GM10248 (cell line): ENCODE measurements at regions of chr1 and their contacts with region 1.

Region 1: GRCh38 chr1:211654838-211655787 is 20.3 kb downstream of the NEK2 start:
- DNase-seq: peak; percentile 79
- CTCF ChIP-seq: peak; percentile 91

Region 2: DNA sequence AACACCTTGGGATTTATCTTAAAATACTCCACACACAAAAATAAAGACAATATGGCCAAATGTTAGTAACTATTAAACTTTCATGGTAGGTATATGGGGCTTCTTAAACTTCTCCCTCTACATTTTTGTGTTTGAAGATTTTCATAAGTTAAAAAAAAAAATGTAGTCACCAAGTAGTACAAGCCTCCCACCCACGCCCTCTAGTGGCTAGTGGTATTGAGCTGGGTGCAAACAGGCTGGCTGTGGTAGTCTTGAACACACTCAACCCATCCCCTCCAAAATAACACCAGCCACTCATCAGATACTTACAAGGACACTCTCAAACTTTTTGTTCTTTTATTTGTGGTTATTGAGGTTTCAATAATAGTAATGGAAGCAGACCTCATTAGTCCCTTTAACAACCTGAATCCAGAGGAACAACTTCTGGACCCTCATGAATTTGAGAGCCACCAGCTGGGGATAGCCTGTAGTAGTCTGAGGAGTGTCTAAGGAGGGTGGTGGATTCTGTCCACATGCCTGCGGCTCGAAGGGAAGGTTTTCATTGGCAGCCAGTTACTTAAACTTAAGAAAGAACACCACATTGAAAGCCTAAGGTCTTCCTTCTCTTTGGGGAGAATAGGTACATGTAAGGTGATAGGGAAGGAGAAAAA is 178.8 kb before region 1 on chr1:
- CTCF ChIA-PET with region 1: interaction called, 11 read pairs
- POLR2A ChIA-PET with region 1: no interaction called
- DNase-seq: peak; percentile 75
- CTCF ChIP-seq: peak; percentile 83

Region 3: GRCh38 chr1:211578640-211579433 is 76.3 kb before region 1 on chr1 and contains the start of gene SLC30A1:
- CTCF ChIA-PET with region 1: interaction called, 12 read pairs
- POLR2A ChIA-PET with region 1: no interaction called
- DNase-seq: peak; percentile 100
- CTCF ChIP-seq: no peak

Region 4: GRCh38 chr1:211643324-211644212 is 11.5 kb before region 1 on chr1:
- CTCF ChIA-PET with region 1: interaction called, 19 read pairs
- POLR2A ChIA-PET with region 1: no interaction called
- DNase-seq: peak; percentile 19
- CTCF ChIP-seq: no peak

Region 5: DNA sequence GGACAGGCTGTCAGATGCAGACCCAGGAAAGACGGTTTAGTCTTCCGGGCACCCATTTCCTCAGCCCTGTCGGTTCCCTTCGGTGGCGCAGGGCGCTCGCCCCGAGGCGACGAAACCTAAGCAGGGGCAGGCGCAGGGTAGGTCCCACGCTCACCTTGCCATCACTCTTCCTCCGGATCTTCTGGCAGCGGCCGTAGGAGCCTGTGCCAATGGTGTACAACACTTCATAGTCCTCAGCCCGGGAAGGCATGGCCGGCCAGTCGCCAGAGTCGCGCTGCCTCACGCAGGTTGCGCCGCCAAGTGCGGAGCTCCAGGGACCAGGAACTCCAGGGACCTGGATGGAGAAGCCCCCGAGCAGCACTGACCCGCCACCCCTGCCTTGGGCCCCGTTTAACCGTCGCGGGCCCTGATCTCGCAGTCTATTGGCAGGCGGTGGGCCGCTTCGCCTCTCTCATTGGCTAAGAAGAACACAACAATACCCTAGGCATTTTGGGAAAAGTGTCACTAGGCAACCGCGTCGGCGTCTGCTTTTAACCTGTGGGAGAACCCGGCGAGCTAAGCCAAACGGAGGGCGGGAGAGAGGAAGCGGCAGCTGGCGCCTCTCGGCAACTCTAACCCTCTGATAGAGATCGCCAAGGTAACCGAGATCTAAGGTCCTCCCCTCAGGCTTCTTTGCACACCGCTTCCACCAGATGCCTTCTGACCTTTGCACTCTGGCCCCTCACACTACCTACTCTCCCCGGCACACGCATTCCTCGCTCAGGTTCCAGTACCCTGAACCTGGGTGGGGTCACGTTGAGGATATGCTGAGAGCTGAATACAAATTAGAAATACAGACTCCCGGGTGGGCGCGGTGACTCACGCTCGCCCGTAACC is 20.4 kb after region 1 on chr1 and contains the start of gene NEK2:
- CTCF ChIA-PET with region 1: interaction called, 10 read pairs
- POLR2A ChIA-PET with region 1: no interaction called
- DNase-seq: peak; percentile 93
- CTCF ChIP-seq: no peak

Region 6: DNA sequence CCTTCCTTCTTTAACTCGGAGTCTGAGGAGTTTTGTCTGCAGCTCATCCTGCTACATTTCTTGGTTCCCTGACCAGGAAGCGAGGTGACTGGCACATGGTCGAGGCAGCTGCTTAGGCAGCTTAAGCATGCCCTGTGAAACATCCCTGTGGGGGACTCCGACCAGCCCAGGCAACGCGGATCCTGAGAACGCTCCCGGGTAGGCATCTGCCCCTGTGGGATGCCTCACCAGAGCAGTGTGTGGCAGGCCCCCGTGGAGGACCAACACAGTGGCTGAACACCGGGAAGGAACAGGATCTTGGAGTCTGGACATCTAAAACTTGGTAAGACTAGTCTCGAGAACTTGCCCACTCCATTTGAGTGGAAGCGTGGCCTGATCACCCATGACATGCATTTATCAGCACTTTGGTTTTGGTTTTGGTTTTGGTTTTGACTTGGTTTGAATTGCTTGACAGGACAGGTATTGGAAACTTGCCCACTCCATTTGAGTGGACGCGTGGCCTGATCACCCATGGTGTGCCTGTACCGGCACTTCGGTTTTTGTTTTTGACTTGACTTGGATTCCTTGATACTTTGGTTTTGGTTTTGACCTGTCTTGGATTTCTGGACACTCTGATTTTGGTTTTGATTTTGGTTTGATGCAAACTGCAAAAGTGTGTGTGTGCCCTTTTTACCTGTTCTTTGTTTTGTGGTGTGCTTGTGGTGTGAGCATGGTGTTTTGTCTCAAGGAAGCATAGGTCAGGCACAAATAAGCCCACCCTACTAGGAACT is 32.5 kb after region 1 on chr1:
- CTCF ChIA-PET with region 1: no interaction called
- POLR2A ChIA-PET with region 1: no interaction called
- DNase-seq: no peak
- CTCF ChIP-seq: no peak

Region 7: GRCh38 chr1:211738691-211739301 is 83.7 kb after region 1 on chr1:
- CTCF ChIA-PET with region 1: no interaction called
- POLR2A ChIA-PET with region 1: no interaction called
- DNase-seq: peak; percentile 51
- CTCF ChIP-seq: no peak